CD4-positive, alpha-beta memory T cell (primary cell): ENCODE measurements at regions of chr12 and their contacts with region 1.

Region 1: DNA sequence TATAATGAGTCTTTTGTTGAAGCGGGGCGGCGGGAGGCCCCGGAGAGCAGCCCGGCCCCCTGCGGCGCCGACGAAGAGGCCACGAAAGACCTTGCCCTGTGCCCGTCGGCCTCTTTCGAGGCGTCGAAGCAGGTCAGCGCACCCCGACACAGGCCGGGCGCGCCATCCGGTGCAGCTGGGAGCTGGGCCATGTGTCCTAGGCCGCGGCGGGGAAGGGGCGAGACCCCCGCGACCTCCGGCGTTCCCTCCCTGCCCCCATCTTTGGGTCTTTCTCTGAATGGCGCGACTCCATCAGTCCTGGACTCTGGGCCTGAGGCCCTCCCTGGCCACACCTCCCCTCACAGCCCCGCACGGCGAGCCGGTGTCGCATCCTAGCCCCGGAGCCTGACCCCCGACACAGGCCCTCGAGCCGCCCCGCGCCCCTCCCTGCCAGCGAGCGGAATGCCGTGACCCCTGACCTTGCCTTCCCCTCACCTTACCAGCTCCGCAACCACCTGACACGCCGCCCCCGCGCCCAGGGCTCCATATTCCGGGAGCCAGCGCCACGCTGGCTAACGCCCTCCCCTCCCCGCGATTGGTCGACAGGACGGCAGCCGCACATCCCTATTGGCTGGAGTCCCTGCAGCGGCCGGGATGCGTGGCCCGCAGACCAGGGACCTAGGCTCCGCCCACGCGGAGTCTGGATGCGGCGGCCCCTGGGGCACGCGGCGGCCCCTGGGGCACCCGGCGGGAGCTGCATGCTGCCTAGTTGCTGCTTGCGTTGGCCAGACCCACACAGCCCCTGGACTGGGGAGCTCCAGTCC is at the start of gene SLC11A2:
- DNase-seq: peak; percentile 89 to 93 (median 89)
- H3K4me3 ChIP-seq: peak within 1 kb of the TSS; percentile 78 to 89
- H3K4me3 Mint-ChIP-seq: peak within 1 kb of the TSS; percentile 97 to 100 (median 98)
- H3K27ac ChIP-seq: peak within 1 kb of the TSS; percentile 83
- H3K27ac Mint-ChIP-seq: peak within 1 kb of the TSS; percentile 95 to 99 (median 98)
- H3K4me1 ChIP-seq: peaks cover 41% of the 10 kb centered on the region
- H3K4me1 Mint-ChIP-seq: peaks cover 26 to 68% (median 47%) of the 10 kb centered on the region in 4 donors
- H3K27me3 ChIP-seq: no peaks in the 10 kb centered on the region
- H3K27me3 Mint-ChIP-seq: no peaks in the 10 kb centered on the region
- total RNA-seq, gene SLC11A2: 55.1 to 62.7 TPM

Region 2: DNA sequence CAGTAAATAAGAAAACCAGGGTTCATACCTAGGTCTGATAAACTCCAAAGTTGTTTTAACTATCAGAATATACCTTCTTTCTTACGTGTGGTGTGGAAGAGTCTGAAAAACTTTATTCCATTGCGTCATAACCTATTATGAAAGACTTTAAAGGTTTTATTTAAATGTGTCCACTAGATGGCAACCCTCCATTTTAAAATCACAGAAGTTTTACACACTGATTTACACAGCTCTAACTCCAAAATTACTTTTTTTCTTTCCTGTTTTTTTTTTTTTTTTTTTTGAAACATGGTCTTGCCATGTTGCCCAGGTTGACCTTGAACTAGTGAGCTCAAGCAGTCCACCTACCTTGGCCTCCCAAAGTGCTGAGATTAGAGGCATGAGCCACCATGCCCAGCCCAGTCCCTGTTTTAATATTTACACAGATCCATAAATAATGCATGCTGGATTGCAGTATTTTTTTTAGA is 200.6 kb before region 1 on chr12:
- CTCF ChIA-PET with region 1: interaction called, 17 read pairs
- POLR2A ChIA-PET with region 1: no interaction called
- intact Hi-C with region 1: loop called (anchors 1 kb)
- DNase-seq: peak in 4 of 5 donors; percentile 47 to 65 (median 61)
- H3K4me3 ChIP-seq: no peak overlapping the region
- H3K4me3 Mint-ChIP-seq: peak overlapping the region in 1 of 8 donors; percentile 57
- H3K27ac ChIP-seq: peak overlapping the region; percentile 45
- H3K27ac Mint-ChIP-seq: peak overlapping the region; percentile 85 to 97 (median 93)
- H3K4me1 ChIP-seq: peaks cover 4% of the 10 kb centered on the region
- H3K4me1 Mint-ChIP-seq: peaks cover 4 to 9% (median 5%) of the 10 kb centered on the region in 4 donors
- H3K27me3 ChIP-seq: no peaks in the 10 kb centered on the region
- H3K27me3 Mint-ChIP-seq: peaks cover 0 to 5% of the 10 kb centered on the region in 2 donors

Region 3: DNA sequence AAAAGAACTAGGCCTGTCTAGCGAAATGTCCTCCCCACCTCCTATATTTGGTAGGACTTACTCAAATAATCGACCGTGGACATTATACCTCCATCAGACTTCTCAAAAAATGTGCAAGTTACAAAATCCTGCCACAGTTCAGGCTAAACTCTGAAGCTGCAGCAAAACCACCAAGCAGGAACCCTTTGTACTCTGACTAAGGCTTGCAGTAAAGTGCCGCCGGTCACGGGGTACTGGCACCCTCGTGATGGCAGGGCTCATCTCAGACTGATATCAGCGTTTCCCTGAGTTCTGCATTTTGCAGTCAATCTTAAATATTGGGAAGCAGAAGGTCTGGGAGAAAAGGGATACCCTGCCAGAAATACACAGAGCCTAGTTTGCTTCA is 17.0 kb before region 1 on chr12:
- CTCF ChIA-PET with region 1: interaction called, 5 read pairs
- POLR2A ChIA-PET with region 1: interaction called, 10 read pairs
- intact Hi-C with region 1: no loop called
- DNase-seq: peak; percentile 45 to 63 (median 51)
- H3K4me3 ChIP-seq: no peak overlapping the region
- H3K4me3 Mint-ChIP-seq: peak overlapping the region in 5 of 8 donors; percentile 21 to 83 (median 46)
- H3K27ac ChIP-seq: peak overlapping the region; percentile 7
- H3K27ac Mint-ChIP-seq: peak overlapping the region; percentile 63 to 88 (median 81)
- H3K4me1 ChIP-seq: peaks cover 27% of the 10 kb centered on the region
- H3K4me1 Mint-ChIP-seq: peaks cover 16 to 40% (median 22%) of the 10 kb centered on the region in 4 donors
- H3K27me3 ChIP-seq: no peaks in the 10 kb centered on the region
- H3K27me3 Mint-ChIP-seq: no peaks in the 10 kb centered on the region

Region 4: DNA sequence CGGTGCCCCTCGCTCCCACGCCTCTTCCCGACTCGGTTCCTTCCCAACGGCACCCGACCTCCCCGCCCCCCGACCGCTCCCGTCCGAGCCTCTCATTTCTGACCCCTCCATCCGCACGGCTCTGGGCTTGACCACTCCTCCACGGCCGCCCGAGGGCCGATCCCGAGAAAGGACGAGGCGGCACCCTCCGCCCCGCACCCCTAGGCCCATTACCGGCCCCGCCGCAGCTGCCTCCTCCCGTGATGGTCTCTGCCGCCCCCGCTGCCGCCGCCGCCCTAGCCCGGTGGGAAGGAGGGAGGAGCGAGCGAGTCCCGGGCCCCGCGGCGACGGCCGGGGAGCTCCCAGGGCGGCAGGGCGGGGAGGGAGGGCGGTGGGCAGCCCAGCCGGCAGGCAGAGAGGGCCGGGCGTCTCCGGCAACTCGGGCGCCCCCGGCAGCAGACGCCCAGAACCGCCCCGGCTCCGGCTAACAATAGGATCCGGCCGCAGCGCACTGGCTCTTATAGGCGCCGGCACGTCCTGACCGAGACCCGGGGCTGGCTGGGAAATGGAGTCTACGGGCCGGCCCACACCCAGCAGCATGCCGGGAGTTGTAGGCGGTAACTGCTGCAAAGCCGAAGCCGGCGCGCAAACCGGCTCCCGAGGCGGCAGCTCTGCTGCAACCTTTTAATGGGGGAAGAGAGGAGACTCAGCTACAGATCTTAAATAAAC is 57.2 kb after region 1 on chr12 and contains the start of gene CSRNP2:
- CTCF ChIA-PET with region 1: interaction called, 3 read pairs
- POLR2A ChIA-PET with region 1: interaction called, 14 read pairs
- intact Hi-C with region 1: no loop called
- DNase-seq: peak; percentile 94 to 96 (median 95)
- H3K4me3 ChIP-seq: peak within 1 kb of the TSS; percentile 67 to 93
- H3K4me3 Mint-ChIP-seq: peak within 1 kb of the TSS; percentile 93 to 98 (median 96)
- H3K27ac ChIP-seq: peak within 1 kb of the TSS; percentile 86
- H3K27ac Mint-ChIP-seq: peak within 1 kb of the TSS; percentile 88 to 97 (median 95)
- H3K4me1 ChIP-seq: peaks cover 21% of the 10 kb centered on the region
- H3K4me1 Mint-ChIP-seq: peaks cover 28 to 45% (median 36%) of the 10 kb centered on the region in 4 donors
- H3K27me3 ChIP-seq: no peaks in the 10 kb centered on the region
- H3K27me3 Mint-ChIP-seq: no peaks in the 10 kb centered on the region
- total RNA-seq, gene CSRNP2: 34.1 to 35.0 TPM